Activated B cell treated with CpG ODN at 0.5 μM for 24 hours (primary cell): ENCODE measurements at regions of chr12 and their contacts with region 1.

Region 1: DNA sequence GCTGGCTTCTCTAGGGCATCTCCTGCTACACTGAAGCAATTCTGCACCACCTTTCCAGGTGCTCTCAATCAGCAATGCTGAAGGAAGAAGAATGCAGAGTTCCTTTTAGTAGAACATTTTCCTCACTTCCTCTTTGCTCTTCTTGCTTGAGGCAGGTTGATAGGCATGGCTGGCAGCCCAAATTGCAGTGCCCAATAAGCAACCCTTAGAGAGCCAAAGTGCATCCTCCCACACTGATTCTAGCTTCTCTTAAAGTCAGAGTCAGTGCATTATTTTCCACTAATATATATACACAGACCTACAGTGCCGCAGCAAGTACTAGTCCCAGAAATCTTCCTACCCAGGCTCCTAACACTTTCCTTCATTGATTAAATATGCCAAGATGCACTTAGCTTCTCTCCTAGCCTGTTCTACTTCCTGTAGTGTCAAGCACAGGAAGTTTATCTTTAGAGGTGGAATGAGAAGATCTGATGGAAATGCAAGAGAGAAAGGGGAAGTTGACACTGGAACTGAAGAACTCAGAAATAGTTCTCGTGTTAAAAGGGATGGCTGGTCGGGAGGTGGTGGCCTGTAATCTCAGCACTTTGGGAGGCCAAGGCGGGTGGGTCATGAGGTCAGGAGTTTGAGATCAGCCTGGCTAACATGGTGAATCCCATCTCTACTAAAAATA is 132.7 kb downstream of the SSPN start:
- DNase-seq: no peak
- ATAC-seq: peak; percentile 95
- H3K4me3 Mint-ChIP-seq: peak overlapping the region; percentile 32
- H3K27ac Mint-ChIP-seq: peak overlapping the region; percentile 82
- H3K4me1 Mint-ChIP-seq: peaks cover 25% of the 10 kb centered on the region
- H3K27me3 Mint-ChIP-seq: no peaks in the 10 kb centered on the region
- CTCF ChIP-seq: no peak

Region 2: DNA sequence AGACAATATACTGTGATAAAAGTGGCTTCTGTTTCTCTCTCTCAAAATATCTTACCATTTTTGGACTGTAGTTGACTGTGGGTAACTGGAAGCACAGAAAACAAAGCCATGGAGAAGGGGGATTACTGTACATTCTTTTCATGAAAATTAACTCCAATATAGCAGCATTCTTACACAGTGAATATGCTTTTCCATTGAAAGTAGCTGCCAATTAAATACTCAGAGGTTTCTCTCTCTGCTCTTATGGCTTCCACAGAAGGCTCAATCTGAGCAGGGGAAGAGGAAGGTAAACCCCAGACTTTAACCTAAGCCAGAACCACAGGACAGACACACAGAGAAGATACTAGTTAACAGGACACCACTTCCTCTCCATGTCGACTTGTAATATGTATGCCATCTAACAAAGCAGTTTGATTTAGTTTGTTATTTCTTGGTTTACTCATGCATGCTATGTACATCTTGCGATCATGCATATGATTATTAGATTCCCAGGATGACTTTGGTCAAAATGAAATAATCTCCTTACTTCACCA is 17.4 kb after region 1 on chr12:
- CTCF ChIA-PET with region 1: no interaction called
- POLR2A ChIA-PET with region 1: no interaction called
- intact Hi-C with region 1: loop called (anchors 2 kb)
- DNase-seq: no peak
- ATAC-seq: peak; percentile 40
- H3K4me3 Mint-ChIP-seq: no peak overlapping the region
- H3K27ac Mint-ChIP-seq: no peak overlapping the region
- H3K4me1 Mint-ChIP-seq: peaks cover 33% of the 10 kb centered on the region
- H3K27me3 Mint-ChIP-seq: no peaks in the 10 kb centered on the region
- CTCF ChIP-seq: no peak